Cardiac septum (tissue), 1 donor: ENCODE measurements at regions of chr4 and their contacts with region 1.

Region 1: GRCh38 chr4:137531986-137532868 is at the start of gene PCDH18:
- DNase-seq: peak; percentile 90
- total RNA-seq, gene PCDH18: 4.9 TPM

Region 2: DNA sequence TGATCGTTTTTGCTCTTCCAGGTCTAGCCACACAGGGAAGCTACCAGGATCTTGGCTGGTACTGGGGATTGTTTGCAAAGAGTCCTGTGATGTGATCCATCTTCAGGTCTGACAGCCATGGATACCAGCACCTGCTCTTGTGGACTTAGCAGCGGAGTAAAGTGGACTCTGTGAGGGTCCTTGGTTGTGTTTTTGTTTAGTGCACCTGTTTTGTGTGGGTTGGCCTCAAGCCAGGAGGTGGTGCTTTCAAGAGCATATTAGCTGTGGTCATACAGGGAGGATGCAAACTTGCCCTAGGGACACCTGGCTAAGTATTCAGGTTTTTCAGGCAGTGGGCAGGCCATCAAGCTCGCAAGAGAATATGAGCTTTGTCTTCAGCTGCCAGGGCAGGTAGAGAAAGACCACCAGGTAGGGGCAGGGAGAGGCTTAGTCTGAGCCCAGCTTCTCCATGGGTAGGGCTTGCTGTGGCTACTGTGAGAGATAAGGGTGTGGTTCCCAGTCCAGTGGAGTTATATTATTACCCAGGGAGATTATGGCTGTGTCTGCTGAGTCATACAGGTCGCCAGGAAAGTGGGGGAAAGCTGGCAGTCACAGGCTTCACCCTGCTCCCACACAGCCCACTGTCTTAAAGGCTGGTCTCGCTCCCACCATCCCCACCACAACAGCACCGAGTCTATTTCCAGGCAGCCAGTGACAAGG is 293.6 kb before region 1 on chr4:
- intact Hi-C with region 1: no loop called
- DNase-seq: no peak

Region 3: GRCh38 chr4:137293281-137293680 is 238.9 kb before region 1 on chr4:
- intact Hi-C with region 1: loop called (anchors 5 kb)
- DNase-seq: no peak

Region 4: GRCh38 chr4:137370206-137370633 is 162.0 kb before region 1 on chr4:
- intact Hi-C with region 1: loop called (anchors 10 kb)
- DNase-seq: no peak